Natural killer cell (primary cell): ENCODE measurements at regions of chr12 and their contacts with region 1.

Region 1: GRCh38 chr12:44930972-44931600 is 55.0 kb upstream of the NELL2 start:
- DNase-seq: peak in 1 of 2 donors; percentile 78
- ATAC-seq: peak in 2 of 3 donors; percentile 26 to 42
- H3K4me3 ChIP-seq: no peak overlapping the region
- H3K4me3 Mint-ChIP-seq: no peak overlapping the region
- H3K27ac ChIP-seq: no peak overlapping the region
- H3K27ac Mint-ChIP-seq: no peak overlapping the region
- H3K4me1 ChIP-seq: no peaks in the 10 kb centered on the region
- H3K4me1 Mint-ChIP-seq: no peaks in the 10 kb centered on the region
- H3K27me3 ChIP-seq: no peaks in the 10 kb centered on the region
- H3K27me3 Mint-ChIP-seq: peaks cover 5 to 8% of the 10 kb centered on the region in 2 donors
- CTCF ChIP-seq: peak; percentile 78

Region 2: GRCh38 chr12:44774815-44775411 is 156.2 kb before region 1 on chr12:
- intact Hi-C with region 1: loop called (anchors 1 kb)
- DNase-seq: peak; percentile 21 to 81
- ATAC-seq: no peak
- H3K4me3 ChIP-seq: no peak overlapping the region
- H3K4me3 Mint-ChIP-seq: no peak overlapping the region
- H3K27ac ChIP-seq: no peak overlapping the region
- H3K27ac Mint-ChIP-seq: no peak overlapping the region
- H3K4me1 ChIP-seq: no peaks in the 10 kb centered on the region
- H3K4me1 Mint-ChIP-seq: no peaks in the 10 kb centered on the region
- H3K27me3 ChIP-seq: no peaks in the 10 kb centered on the region
- H3K27me3 Mint-ChIP-seq: peaks cover 0 to 2% of the 10 kb centered on the region in 2 donors
- CTCF ChIP-seq: peak; percentile 84

Region 3: DNA sequence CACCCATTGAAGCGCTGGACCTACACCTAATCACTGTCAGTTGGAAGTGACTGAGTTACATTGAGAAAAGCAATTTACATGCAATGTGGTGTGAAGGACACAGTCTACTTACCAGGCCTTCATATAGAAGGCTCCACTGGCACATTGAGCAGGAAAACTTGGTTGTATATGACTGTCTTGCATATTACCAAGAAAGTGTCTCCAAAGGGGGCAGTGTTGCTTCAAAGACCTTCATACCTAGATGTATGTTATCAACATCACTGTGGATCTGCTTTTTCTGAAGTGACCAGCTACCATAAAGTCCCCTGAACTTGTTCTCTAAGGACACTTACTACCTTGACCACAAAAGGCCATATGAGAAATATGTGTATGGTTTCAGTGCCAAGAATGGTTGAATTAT is 119.0 kb before region 1 on chr12:
- intact Hi-C with region 1: loop called (anchors 1 kb)
- DNase-seq: peak in 1 of 2 donors; percentile 84
- ATAC-seq: peak in 2 of 3 donors; percentile 55 to 67
- H3K4me3 ChIP-seq: no peak overlapping the region
- H3K4me3 Mint-ChIP-seq: no peak overlapping the region
- H3K27ac ChIP-seq: no peak overlapping the region
- H3K27ac Mint-ChIP-seq: no peak overlapping the region
- H3K4me1 ChIP-seq: no peaks in the 10 kb centered on the region
- H3K4me1 Mint-ChIP-seq: no peaks in the 10 kb centered on the region
- H3K27me3 ChIP-seq: no peaks in the 10 kb centered on the region
- H3K27me3 Mint-ChIP-seq: peaks cover 0 to 3% of the 10 kb centered on the region in 2 donors
- CTCF ChIP-seq: peak; percentile 23